Activated T-helper 2 cell treated with anti-CD3 and anti-CD28 coated beads, Interferon-gamma antibody, Interleukin-2, Interleukin-4, amounts not matched to agents 10 μg/mL and 5 μg/mL and 100 μg/mL, durations not matched to agents 14 hours and 24 hours and 36 hours (primary cell): ENCODE measurements at regions of chrX and their contacts with region 1.

Region 1: GRCh38 chrX:78653118-78653822 is 5.9 kb downstream of the RTL3 start:
- DNase-seq: no peak
- H3K4me3 Mint-ChIP-seq: peak overlapping the region; percentile 70
- H3K27ac Mint-ChIP-seq: peak overlapping the region; percentile 88
- H3K4me1 Mint-ChIP-seq: peaks cover 28% of the 10 kb centered on the region
- H3K27me3 Mint-ChIP-seq: no peaks in the 10 kb centered on the region

Region 2: DNA sequence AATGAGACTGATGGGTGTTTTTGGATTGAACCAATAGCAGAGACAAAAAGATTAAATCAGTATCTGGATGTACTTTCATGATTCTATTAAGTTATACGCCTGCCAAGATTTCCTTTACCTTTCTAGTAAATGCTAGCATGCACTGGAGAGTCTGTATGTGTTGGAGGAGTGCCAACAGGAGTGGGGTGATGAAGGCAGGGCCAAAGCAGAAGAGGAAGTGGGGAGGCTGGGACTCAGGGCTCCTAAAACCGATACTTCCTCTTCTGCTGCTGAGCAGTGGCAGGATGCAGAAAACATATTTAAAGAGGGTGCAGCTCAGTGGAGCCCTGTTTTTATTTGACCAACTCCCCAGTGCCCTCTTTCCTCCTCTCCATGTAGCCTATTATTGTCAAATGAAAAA is 331.5 kb before region 1 on chrX:
- intact Hi-C with region 1: loop called (anchors 10 kb)
- DNase-seq: peak; percentile 38
- H3K4me3 Mint-ChIP-seq: peak overlapping the region; percentile 33
- H3K27ac Mint-ChIP-seq: peak overlapping the region; percentile 89
- H3K4me1 Mint-ChIP-seq: peaks cover 30% of the 10 kb centered on the region
- H3K27me3 Mint-ChIP-seq: no peaks in the 10 kb centered on the region

Region 3: GRCh38 chrX:78517124-78517523 is 136.1 kb before region 1 on chrX:
- intact Hi-C with region 1: loop called (anchors 2 kb)
- DNase-seq: peak; percentile 64
- H3K4me3 Mint-ChIP-seq: no peak overlapping the region
- H3K27ac Mint-ChIP-seq: peak overlapping the region; percentile 86
- H3K4me1 Mint-ChIP-seq: peaks cover 47% of the 10 kb centered on the region
- H3K27me3 Mint-ChIP-seq: no peaks in the 10 kb centered on the region

Region 4: GRCh38 chrX:79081895-79082512 is 428.7 kb after region 1 on chrX:
- intact Hi-C with region 1: loop called (anchors 10 kb)
- DNase-seq: peak; percentile 10
- H3K4me3 Mint-ChIP-seq: no peak overlapping the region
- H3K27ac Mint-ChIP-seq: peak overlapping the region; percentile 65
- H3K4me1 Mint-ChIP-seq: peaks cover 19% of the 10 kb centered on the region
- H3K27me3 Mint-ChIP-seq: no peaks in the 10 kb centered on the region

Region 5: DNA sequence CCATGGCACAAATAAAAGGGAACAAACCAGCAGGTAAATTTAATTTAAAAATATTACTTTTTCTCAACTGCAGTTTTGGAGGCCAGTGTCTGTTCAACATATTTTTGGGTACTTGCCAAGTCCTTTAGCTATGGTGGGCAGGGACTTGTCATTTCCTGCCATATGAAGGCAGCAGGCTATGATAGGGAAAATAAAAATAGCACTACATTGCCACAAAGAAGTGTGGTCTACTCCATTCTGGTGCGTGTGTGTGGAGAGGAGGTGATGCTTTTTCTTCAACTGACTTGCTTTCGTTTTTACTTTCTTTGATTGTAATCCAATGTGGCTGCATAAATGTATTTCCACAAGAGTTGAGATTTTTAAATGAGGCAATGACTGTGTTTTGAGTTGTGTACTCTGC is 508.4 kb after region 1 on chrX:
- intact Hi-C with region 1: loop called (anchors 5 kb)
- DNase-seq: peak; percentile 43
- H3K4me3 Mint-ChIP-seq: peak overlapping the region; percentile 89
- H3K27ac Mint-ChIP-seq: peak overlapping the region; percentile 99
- H3K4me1 Mint-ChIP-seq: peaks cover 54% of the 10 kb centered on the region
- H3K27me3 Mint-ChIP-seq: no peaks in the 10 kb centered on the region